ENCODE measurements at regions of chr5 and their contacts with region 1.

Region 1: GRCh38 chr5:17143335-17143734 is 74.1 kb upstream of the BASP1 start:
- DNase-seq: peak; percentile 68
- H3K4me3 ChIP-seq: no peak overlapping the region
- H3K27ac ChIP-seq: peak overlapping the region; percentile 15
- H3K4me1 ChIP-seq: peaks cover 18% of the 10 kb centered on the region
- H3K27me3 ChIP-seq: no peaks in the 10 kb centered on the region
- CTCF ChIP-seq: no peak
- POLR2A ChIP-seq: no peak

Region 2: DNA sequence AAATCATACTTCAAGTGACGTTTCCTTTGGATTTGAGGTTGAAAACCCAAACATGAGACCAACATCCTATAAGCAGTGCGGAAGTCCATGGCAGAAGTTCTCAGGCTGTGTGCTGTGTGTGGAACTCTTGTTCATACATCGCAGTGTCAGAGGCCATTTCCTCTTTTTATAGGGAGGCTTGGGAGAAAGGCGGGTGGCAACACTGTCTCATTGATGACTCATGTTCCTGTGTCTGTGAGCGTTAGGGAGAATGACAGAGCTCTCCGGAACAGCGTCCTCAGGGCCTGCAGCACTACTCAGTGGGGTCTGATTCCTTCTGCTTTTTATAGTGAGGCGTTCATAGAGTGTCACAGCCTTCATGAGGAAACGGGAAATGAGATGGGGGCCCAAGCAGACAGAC is 24.7 kb before region 1 on chr5:
- CTCF ChIA-PET with region 1: no interaction called
- POLR2A ChIA-PET with region 1: no interaction called
- dilution Hi-C with region 1: no loop called
- intact Hi-C with region 1: no loop called
- DNase-seq: peak; percentile 99
- H3K4me3 ChIP-seq: no peak overlapping the region
- H3K27ac ChIP-seq: peak overlapping the region; percentile 85
- H3K4me1 ChIP-seq: peaks cover 32% of the 10 kb centered on the region
- H3K27me3 ChIP-seq: no peaks in the 10 kb centered on the region
- CTCF ChIP-seq: no peak
- POLR2A ChIP-seq: peak; percentile 64

Region 3: GRCh38 chr5:17169507-17169906 is 26.2 kb after region 1 on chr5:
- CTCF ChIA-PET with region 1: no interaction called
- POLR2A ChIA-PET with region 1: no interaction called
- dilution Hi-C with region 1: no loop called
- intact Hi-C with region 1: loop called (anchors 1 kb)
- DNase-seq: peak; percentile 91
- H3K4me3 ChIP-seq: peak overlapping the region in 1 of 3 experiments; percentile 15
- H3K27ac ChIP-seq: peak overlapping the region; percentile 85
- H3K4me1 ChIP-seq: peaks cover 34% of the 10 kb centered on the region
- H3K27me3 ChIP-seq: no peaks in the 10 kb centered on the region
- CTCF ChIP-seq: no peak
- POLR2A ChIP-seq: peak; percentile 50

Measured in endothelial cell of umbilical vein (primary cell).